CD4-positive, alpha-beta T cell (primary cell): ENCODE measurements at regions of chr20 and their contacts with region 1.

Region 1: GRCh38 chr20:50165684-50166554 is 12.4 kb upstream of the PEDS1 start:
- DNase-seq: peak in 13 of 14 experiments; percentile 61 to 90 (median 75)
- ATAC-seq: peak; percentile 88
- H3K4me3 ChIP-seq: peak overlapping the region; percentile 24
- H3K4me3 Mint-ChIP-seq: peak overlapping the region; percentile 17
- H3K27ac ChIP-seq: no peak overlapping the region
- H3K27ac Mint-ChIP-seq: no peak overlapping the region
- H3K4me1 ChIP-seq: peaks cover 13% of the 10 kb centered on the region
- H3K4me1 Mint-ChIP-seq: peaks cover 16% of the 10 kb centered on the region
- H3K27me3 ChIP-seq: no peaks in the 10 kb centered on the region
- H3K27me3 Mint-ChIP-seq: peaks cover 11% of the 10 kb centered on the region
- CTCF ChIP-seq: no peak

Region 2: DNA sequence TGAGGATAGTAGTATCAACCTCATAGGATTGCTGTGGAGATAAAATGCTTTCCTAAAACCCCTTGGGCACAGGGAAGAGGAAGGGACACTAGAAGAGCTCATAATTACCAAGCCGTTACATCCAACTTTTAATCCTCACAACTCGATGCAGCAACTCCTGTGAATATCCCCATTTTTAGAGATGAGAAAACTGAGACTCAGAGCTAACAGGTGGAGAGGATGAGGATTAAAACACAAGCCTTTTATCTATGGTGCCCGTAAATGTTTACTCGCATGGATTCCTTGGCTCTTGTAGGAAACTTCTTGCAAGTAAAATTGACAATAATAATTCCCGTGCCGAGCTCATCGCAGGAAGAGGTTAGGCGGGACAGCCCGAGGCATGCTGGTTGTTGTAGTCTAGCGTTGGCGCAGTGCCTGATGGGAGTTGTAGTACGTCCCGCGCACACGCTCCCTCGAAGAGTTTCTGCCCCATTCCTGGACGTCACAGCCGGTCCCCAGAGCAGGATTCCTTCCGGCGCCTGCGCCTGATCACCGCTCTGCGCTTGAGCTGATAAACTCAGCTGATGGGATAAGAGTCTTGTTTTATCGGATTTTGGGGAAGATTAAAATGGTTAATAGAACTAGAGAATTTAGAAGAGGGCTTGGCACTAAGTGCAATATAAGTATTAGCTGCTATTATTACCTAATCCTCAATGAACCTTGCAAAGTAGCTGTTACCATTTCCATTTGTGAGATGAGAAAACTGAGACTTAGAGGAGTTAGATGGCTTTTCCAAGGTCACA is 50.1 kb before region 1 on chr20:
- CTCF ChIA-PET with region 1: interaction called, 174 read pairs
- POLR2A ChIA-PET with region 1: interaction called, 30 read pairs
- intact Hi-C with region 1: no loop called
- DNase-seq: peak; percentile 82 to 97 (median 88)
- ATAC-seq: peak; percentile 83
- H3K4me3 ChIP-seq: peak overlapping the region; percentile 58
- H3K4me3 Mint-ChIP-seq: peak overlapping the region; percentile 92
- H3K27ac ChIP-seq: no peak overlapping the region
- H3K27ac Mint-ChIP-seq: peak overlapping the region; percentile 85
- H3K4me1 ChIP-seq: peaks cover 53% of the 10 kb centered on the region
- H3K4me1 Mint-ChIP-seq: peaks cover 53% of the 10 kb centered on the region
- H3K27me3 ChIP-seq: no peaks in the 10 kb centered on the region
- H3K27me3 Mint-ChIP-seq: no peaks in the 10 kb centered on the region
- CTCF ChIP-seq: no peak

Region 3: GRCh38 chr20:50133474-50134217 is 32.3 kb before region 1 on chr20:
- CTCF ChIA-PET with region 1: interaction called, 13 read pairs
- POLR2A ChIA-PET with region 1: no interaction called
- intact Hi-C with region 1: no loop called
- DNase-seq: peak in 1 of 14 experiments; percentile 8
- ATAC-seq: peak; percentile 34
- H3K4me3 ChIP-seq: no peak overlapping the region
- H3K4me3 Mint-ChIP-seq: no peak overlapping the region
- H3K27ac ChIP-seq: no peak overlapping the region
- H3K27ac Mint-ChIP-seq: no peak overlapping the region
- H3K4me1 ChIP-seq: no peaks in the 10 kb centered on the region
- H3K4me1 Mint-ChIP-seq: no peaks in the 10 kb centered on the region
- H3K27me3 ChIP-seq: no peaks in the 10 kb centered on the region
- H3K27me3 Mint-ChIP-seq: no peaks in the 10 kb centered on the region
- CTCF ChIP-seq: no peak

Region 4: DNA sequence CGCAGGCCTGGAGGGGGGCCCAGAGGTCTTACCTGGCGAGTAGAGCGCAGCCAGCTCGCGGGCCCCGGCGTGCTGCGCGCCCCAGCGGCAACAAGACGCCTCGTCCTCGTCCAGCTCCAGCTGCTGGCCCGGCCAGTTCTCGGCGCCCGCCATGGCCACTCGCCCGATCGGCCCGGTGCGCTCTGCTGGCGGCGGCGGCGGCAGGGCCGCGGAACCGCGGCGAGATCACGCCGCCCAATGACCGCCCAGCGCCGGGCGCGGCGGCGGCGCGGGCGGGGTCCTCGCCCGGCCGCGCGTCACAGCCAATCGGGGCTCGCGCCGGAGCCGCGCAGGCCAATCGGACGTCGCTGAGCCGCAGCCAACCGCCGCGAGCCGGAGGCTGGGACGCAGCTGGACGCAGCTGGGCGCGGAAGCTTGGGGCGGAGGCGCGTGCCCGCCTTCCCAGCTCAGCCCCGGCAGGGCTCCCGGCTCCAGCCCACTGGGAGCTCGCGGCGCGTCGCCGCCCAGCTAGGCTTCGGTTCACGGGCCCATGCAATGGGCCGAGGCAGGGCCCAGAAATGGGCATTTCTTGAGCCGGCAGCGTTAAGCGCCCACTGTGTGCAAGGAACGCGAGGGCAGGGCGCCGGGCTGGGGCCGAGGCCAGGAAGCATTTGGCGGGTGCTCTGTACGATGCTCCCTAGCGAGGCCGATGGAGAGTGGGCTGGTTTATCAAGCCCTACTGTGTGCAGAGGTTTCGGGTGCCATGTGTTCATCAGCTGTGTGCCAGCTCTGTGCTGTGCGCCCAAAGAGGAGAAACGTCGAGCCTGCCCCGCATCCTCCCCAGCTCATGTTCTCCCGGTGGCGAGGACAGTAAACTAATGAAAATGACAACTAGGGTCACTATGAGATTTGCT is 12.2 kb before region 1 on chr20 and contains the start of gene PEDS1:
- CTCF ChIA-PET with region 1: interaction called, 19 read pairs
- POLR2A ChIA-PET with region 1: interaction called, 9 read pairs
- intact Hi-C with region 1: no loop called
- DNase-seq: peak; percentile 59 to 93 (median 78)
- ATAC-seq: peak; percentile 95
- H3K4me3 ChIP-seq: peak within 1 kb of the TSS; percentile 96
- H3K4me3 Mint-ChIP-seq: peak within 1 kb of the TSS; percentile 94
- H3K27ac ChIP-seq: peak within 1 kb of the TSS; percentile 70 to 75
- H3K27ac Mint-ChIP-seq: peak within 1 kb of the TSS; percentile 99
- H3K4me1 ChIP-seq: peaks cover 51% of the 10 kb centered on the region
- H3K4me1 Mint-ChIP-seq: peaks cover 51% of the 10 kb centered on the region
- H3K27me3 ChIP-seq: no peaks in the 10 kb centered on the region
- H3K27me3 Mint-ChIP-seq: no peaks in the 10 kb centered on the region
- CTCF ChIP-seq: no peak
- total RNA-seq, gene PEDS1: 21.3 to 21.9 TPM

Region 5: GRCh38 chr20:50762045-50762422 is 596.1 kb after region 1 on chr20:
- CTCF ChIA-PET with region 1: no interaction called
- POLR2A ChIA-PET with region 1: no interaction called
- intact Hi-C with region 1: no loop called
- DNase-seq: no peak
- ATAC-seq: no peak
- H3K4me3 ChIP-seq: no peak overlapping the region
- H3K4me3 Mint-ChIP-seq: no peak overlapping the region
- H3K27ac ChIP-seq: no peak overlapping the region
- H3K27ac Mint-ChIP-seq: no peak overlapping the region
- H3K4me1 ChIP-seq: no peaks in the 10 kb centered on the region
- H3K4me1 Mint-ChIP-seq: no peaks in the 10 kb centered on the region
- H3K27me3 ChIP-seq: no peaks in the 10 kb centered on the region
- H3K27me3 Mint-ChIP-seq: no peaks in the 10 kb centered on the region
- CTCF ChIP-seq: no peak